CD4-positive, alpha-beta T cell (primary cell): ENCODE measurements at regions of chr5 and their contacts with region 1.

Region 1: DNA sequence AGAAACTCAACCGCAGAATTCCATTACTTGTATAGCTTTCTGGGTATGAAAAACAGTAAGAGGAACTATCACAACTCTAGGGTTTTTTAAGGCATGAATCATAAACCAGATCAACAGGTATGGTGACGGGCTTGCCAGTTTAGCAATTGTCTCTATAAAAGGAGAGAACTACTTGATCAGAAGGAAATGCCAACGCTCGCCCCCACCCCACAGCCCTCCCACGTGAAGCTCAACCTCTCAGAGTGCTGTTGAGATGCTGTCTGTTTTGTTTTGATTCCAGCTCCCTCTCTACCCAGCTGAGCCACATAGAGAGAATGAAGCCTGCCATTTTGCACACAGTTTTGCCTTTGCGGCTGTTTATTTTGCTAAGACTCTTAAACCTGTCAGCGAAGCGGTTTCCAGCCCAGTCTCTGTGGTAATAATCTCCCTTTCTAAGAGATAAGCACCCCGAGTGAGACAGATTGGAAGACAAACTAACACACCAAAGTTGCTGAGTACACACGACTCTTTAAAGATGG is 257.9 kb upstream of the ANKRD55 start:
- DNase-seq: peak in 12 of 14 experiments; percentile 38 to 69 (median 54)
- ATAC-seq: peak; percentile 96
- H3K4me3 ChIP-seq: no peak overlapping the region
- H3K4me3 Mint-ChIP-seq: peak overlapping the region; percentile 1
- H3K27ac ChIP-seq: peak overlapping the region in 1 of 2 donors; percentile 47
- H3K27ac Mint-ChIP-seq: peak overlapping the region; percentile 77
- H3K4me1 ChIP-seq: peaks cover 14% of the 10 kb centered on the region
- H3K4me1 Mint-ChIP-seq: peaks cover 31% of the 10 kb centered on the region
- H3K27me3 ChIP-seq: no peaks in the 10 kb centered on the region
- H3K27me3 Mint-ChIP-seq: no peaks in the 10 kb centered on the region
- CTCF ChIP-seq: no peak

Region 2: GRCh38 chr5:56422076-56422762 is 68.8 kb before region 1 on chr5:
- CTCF ChIA-PET with region 1: no interaction called
- POLR2A ChIA-PET with region 1: no interaction called
- intact Hi-C with region 1: no loop called
- DNase-seq: no peak
- ATAC-seq: no peak
- H3K4me3 ChIP-seq: no peak overlapping the region
- H3K4me3 Mint-ChIP-seq: no peak overlapping the region
- H3K27ac ChIP-seq: no peak overlapping the region
- H3K27ac Mint-ChIP-seq: no peak overlapping the region
- H3K4me1 ChIP-seq: no peaks in the 10 kb centered on the region
- H3K4me1 Mint-ChIP-seq: no peaks in the 10 kb centered on the region
- H3K27me3 ChIP-seq: no peaks in the 10 kb centered on the region
- H3K27me3 Mint-ChIP-seq: no peaks in the 10 kb centered on the region
- CTCF ChIP-seq: no peak

Region 3: DNA sequence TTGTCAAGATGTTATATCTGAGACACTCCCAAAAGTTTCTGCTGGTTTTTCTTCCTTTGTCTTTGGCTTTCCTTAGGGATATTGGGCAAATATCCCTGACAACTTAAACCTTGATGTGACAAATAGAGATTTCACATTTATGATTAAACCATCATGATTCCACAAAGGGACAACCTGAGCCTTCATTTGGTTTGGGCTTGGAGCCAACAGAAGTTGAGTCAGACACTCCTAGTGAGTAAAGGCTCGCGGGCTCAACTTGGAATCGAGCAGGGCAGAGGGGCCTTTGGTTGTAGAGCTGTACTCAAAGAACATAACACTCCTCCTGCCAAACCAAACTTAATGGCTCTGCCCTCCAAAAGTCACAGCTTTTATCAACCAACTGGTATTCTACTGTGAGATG is 34.1 kb after region 1 on chr5:
- CTCF ChIA-PET with region 1: no interaction called
- POLR2A ChIA-PET with region 1: no interaction called
- intact Hi-C with region 1: loop called in 1 of 2 experiments (anchors 5 kb)
- DNase-seq: peak in 1 of 14 experiments; percentile 34
- ATAC-seq: no peak
- H3K4me3 ChIP-seq: no peak overlapping the region
- H3K4me3 Mint-ChIP-seq: no peak overlapping the region
- H3K27ac ChIP-seq: no peak overlapping the region
- H3K27ac Mint-ChIP-seq: no peak overlapping the region
- H3K4me1 ChIP-seq: peaks cover 6% of the 10 kb centered on the region
- H3K4me1 Mint-ChIP-seq: peaks cover 4% of the 10 kb centered on the region
- H3K27me3 ChIP-seq: no peaks in the 10 kb centered on the region
- H3K27me3 Mint-ChIP-seq: no peaks in the 10 kb centered on the region
- CTCF ChIP-seq: no peak

Region 4: GRCh38 chr5:56569566-56569965 is 78.6 kb after region 1 on chr5:
- CTCF ChIA-PET with region 1: no interaction called
- POLR2A ChIA-PET with region 1: no interaction called
- intact Hi-C with region 1: no loop called
- DNase-seq: no peak
- ATAC-seq: no peak
- H3K4me3 ChIP-seq: no peak overlapping the region
- H3K4me3 Mint-ChIP-seq: no peak overlapping the region
- H3K27ac ChIP-seq: no peak overlapping the region
- H3K27ac Mint-ChIP-seq: no peak overlapping the region
- H3K4me1 ChIP-seq: peaks cover 7% of the 10 kb centered on the region
- H3K4me1 Mint-ChIP-seq: peaks cover 34% of the 10 kb centered on the region
- H3K27me3 ChIP-seq: no peaks in the 10 kb centered on the region
- H3K27me3 Mint-ChIP-seq: no peaks in the 10 kb centered on the region
- CTCF ChIP-seq: no peak